Prostate gland (tissue), 2 donors: ENCODE measurements at regions of chr12 and their contacts with region 1.

Region 1: DNA sequence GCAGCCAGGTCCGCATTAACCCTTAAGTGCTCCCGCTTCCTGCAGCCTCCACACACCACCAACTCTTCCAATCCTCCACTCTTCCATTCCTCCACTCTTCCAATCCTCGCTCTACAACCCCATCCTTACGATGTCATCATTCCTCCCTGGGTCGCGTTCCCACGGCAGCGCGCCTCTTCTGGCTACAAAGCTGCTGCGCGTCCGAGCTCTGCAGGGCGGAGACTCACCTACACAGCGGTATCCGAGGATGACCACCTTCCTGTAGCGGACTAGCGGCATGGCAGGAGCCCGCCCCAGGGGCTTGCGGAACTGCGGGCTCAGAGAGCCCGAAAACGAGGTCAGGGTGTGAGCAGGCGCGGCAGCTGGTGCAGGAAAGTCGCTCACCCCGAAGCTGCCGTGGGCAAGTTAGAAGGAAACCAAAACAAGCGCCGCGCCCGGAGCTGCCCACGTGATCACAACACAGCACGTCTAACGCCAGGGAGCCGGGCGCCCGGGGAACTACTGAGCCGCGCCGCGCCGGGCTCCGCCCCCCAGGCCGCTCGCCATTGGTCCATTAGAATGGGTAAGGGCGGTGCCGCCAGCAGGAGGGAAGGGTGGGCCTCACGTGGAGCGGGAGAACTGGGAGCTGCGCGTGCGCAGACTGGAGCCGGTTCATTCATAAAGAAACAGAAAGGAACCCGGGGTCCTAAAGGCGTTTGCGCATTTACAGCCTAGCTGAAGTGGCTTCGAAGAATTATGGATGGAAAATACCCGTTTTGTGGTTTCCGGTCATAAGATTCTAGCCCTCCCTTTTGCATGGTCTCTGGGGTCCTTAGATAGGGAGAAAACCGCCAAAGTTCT is at the start of gene RHEBL1:
- DNase-seq: peak; percentile 98
- H3K4me3 ChIP-seq: peak within 1 kb of the TSS; percentile 47 to 71
- H3K27ac ChIP-seq: peak within 1 kb of the TSS; percentile 60 to 61
- H3K4me1 ChIP-seq: no peaks in the 10 kb centered on the region
- H3K27me3 ChIP-seq: no peaks in the 10 kb centered on the region
- CTCF ChIP-seq: peak in 3 of 4 experiments; percentile 19 to 38 (median 33)
- POLR2A ChIP-seq: peak; percentile 55
- total RNA-seq, gene RHEBL1: 1.1 to 2.3 TPM

Region 2: DNA sequence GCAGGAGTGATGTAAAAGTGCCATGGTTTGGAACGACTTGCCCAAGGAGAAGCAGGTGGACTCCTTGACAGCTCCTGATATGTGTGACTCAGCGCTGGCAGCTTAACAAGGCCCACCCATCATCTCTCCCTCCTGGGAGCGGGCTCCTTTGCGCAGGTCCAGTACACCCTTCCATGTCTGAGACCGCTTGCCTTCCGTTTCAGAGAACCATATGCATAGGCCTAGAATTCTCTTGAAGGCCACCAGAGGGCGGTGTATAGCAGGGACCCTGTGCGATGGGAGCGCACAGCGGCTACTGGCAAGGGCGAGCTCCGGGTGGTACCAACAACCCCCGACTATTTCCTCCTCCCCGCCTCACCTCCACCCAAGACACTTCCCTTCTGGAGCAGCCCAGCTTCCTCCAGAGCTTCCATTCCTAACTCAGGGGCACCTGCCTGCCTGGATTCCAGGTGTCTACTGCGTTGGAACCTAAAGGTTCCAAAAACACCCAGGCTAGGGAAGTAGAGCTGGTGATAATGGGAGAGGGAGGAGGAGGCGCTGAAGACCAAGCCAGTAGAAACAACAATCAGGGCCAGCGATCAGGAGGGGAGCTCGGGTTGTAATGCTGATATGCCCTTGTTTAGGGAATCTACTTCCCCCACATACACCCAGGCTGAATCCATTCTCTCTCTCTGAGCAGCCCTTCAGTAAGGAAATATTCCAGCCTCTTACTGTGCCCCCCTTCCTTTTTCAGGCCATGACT is 18.6 kb after region 1 on chr12:
- intact Hi-C with region 1: no loop called
- DNase-seq: peak; percentile 68
- H3K4me3 ChIP-seq: no peak overlapping the region
- H3K27ac ChIP-seq: no peak overlapping the region
- H3K4me1 ChIP-seq: peaks cover 5% of the 10 kb centered on the region
- H3K27me3 ChIP-seq: peaks cover 27% of the 10 kb centered on the region
- CTCF ChIP-seq: peak; percentile 68 to 88 (median 80)
- POLR2A ChIP-seq: no peak

Region 3: DNA sequence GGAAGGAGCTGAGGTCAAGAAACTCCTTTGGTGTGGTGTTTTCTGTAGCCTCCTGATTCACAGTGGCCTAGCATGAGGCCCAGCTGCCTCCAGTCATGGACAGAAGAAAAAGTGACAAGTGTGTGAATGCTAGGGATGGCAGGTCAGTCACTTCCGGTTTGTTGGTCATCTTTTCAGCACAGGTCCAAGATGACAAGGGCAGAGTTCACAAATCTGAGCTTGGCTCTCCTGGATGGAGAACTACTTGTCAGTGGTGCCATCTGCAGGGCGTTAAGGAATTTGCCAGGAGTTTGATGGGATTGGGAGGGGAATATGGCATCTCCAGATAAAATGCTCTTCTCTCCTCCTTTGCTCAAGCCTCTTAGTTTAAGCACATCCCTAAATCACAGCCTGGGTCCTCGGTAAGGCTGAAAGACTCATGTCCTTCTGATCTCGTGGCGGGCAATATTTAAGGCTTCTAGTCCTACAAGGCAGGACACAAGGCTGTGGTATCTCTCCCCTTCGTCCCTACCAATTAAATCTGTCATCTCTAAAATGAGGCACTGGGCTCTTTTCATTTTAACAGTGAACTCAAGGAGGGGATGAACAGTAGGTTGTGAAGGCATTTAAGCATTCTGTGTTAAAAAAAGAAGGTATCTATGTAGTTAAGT is 51.4 kb after region 1 on chr12:
- intact Hi-C with region 1: loop called (anchors 10 kb)
- DNase-seq: peak; percentile 36
- H3K4me3 ChIP-seq: no peak overlapping the region
- H3K27ac ChIP-seq: no peak overlapping the region
- H3K4me1 ChIP-seq: no peaks in the 10 kb centered on the region
- H3K27me3 ChIP-seq: no peaks in the 10 kb centered on the region
- CTCF ChIP-seq: peak in 3 of 4 experiments; percentile 45 to 56 (median 56)
- POLR2A ChIP-seq: no peak